ENCODE measurements at regions of chr17 and their contacts with region 1.

Region 1: GRCh38 chr17:44350733-44351226 is 5.7 kb downstream of the GRN start:
- DNase-seq: peak; percentile 83
- ATAC-seq: peak; percentile 86
- H3K4me3 Mint-ChIP-seq: no peak overlapping the region
- H3K27ac Mint-ChIP-seq: no peak overlapping the region
- H3K4me1 Mint-ChIP-seq: peaks cover 18% of the 10 kb centered on the region
- H3K27me3 Mint-ChIP-seq: peaks cover 6% of the 10 kb centered on the region

Region 2: DNA sequence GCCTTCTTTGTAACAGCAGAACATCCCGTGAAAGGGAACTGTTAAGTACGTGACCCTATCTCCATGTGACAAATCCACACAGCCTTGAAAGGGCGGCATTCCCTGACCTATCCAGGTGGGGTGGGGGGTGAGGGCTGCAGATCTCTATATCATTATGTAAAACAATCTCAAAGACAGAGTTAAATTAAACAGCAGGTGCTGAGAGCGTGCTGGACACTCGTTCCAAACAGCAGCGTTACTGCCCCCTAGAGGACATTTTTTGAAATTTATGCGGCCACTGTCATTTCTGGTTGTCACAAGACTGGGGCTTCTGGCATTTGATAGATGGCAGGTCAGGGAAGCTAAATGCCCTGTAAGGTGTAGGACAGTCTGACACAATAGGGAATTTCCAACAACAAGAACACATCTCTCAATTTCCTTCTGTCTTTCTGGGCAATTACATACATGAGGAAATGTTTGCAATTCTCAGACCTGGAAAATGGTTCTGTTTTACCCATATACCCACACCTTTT is 19.5 kb before region 1 on chr17:
- CTCF ChIA-PET with region 1: interaction called, 70 read pairs
- POLR2A ChIA-PET with region 1: no interaction called
- DNase-seq: peak; percentile 87
- ATAC-seq: peak; percentile 42
- H3K4me3 Mint-ChIP-seq: no peak overlapping the region
- H3K27ac Mint-ChIP-seq: peak overlapping the region; percentile 49
- H3K4me1 Mint-ChIP-seq: peaks cover 18% of the 10 kb centered on the region
- H3K27me3 Mint-ChIP-seq: no peaks in the 10 kb centered on the region

Region 3: DNA sequence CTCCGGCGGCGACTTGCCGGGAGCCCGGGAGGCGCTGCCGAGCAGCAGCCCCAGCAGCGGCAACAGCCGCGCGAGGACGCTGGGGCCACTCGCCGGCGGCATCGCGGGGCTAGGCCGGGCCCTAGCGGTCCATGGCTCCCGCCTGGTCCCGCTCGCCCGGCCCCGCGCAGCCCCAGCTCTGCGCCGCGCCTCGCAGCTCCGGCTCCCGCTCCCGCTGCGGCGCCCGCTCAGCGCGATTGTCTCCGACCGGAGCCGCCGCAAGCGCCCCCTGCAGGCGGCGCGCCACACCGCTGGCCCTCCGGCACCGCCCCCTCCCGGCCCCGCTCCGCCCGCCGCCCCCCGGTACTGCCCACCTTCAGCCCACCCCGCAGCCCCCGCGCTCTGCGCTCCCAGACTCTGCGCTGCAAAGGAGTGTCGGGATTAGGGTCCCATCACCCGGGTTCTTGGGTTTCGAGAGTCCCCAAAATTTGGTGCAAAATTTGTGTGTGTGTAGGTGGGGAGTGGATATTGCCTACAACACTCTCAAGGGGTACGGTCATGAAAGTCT is 12.9 kb after region 1 on chr17 and contains the start of gene FAM171A2:
- CTCF ChIA-PET with region 1: interaction called, 29 read pairs
- POLR2A ChIA-PET with region 1: interaction called, 3 read pairs
- DNase-seq: peak; percentile 70
- ATAC-seq: peak; percentile 93
- H3K4me3 Mint-ChIP-seq: peak within 1 kb of the TSS; percentile 73
- H3K27ac Mint-ChIP-seq: no peak within 1 kb of the TSS
- H3K4me1 Mint-ChIP-seq: peaks cover 4% of the 10 kb centered on the region
- H3K27me3 Mint-ChIP-seq: peaks cover 40% of the 10 kb centered on the region
- total RNA-seq, gene FAM171A2: 0.37 to 0.45 TPM

Measured in activated CD8-positive, alpha-beta T cell treated with anti-CD3 and anti-CD28 coated beads, Interleukin-2, amount 10 ng/mL, durations not matched to agents 7 days and 5 days (primary cell).